ENCODE measurements at regions of chr6 and their contacts with region 1.

Region 1: GRCh38 chr6:131063028-131063763 is at the start of gene EPB41L2:
- DNase-seq: peak; percentile 80
- H3K4me3 Mint-ChIP-seq: peak within 1 kb of the TSS; percentile 80
- H3K27ac Mint-ChIP-seq: no peak within 1 kb of the TSS
- H3K4me1 Mint-ChIP-seq: peaks cover 22% of the 10 kb centered on the region
- H3K27me3 Mint-ChIP-seq: peaks cover 2% of the 10 kb centered on the region
- total RNA-seq, gene EPB41L2: 33.5 to 37.7 TPM

Region 2: GRCh38 chr6:130933712-130934200 is 129.4 kb before region 1 on chr6:
- CTCF ChIA-PET with region 1: no interaction called
- intact Hi-C with region 1: no loop called
- DNase-seq: no peak
- H3K4me3 Mint-ChIP-seq: no peak overlapping the region
- H3K27ac Mint-ChIP-seq: no peak overlapping the region
- H3K4me1 Mint-ChIP-seq: no peaks in the 10 kb centered on the region
- H3K27me3 Mint-ChIP-seq: no peaks in the 10 kb centered on the region

Region 3: DNA sequence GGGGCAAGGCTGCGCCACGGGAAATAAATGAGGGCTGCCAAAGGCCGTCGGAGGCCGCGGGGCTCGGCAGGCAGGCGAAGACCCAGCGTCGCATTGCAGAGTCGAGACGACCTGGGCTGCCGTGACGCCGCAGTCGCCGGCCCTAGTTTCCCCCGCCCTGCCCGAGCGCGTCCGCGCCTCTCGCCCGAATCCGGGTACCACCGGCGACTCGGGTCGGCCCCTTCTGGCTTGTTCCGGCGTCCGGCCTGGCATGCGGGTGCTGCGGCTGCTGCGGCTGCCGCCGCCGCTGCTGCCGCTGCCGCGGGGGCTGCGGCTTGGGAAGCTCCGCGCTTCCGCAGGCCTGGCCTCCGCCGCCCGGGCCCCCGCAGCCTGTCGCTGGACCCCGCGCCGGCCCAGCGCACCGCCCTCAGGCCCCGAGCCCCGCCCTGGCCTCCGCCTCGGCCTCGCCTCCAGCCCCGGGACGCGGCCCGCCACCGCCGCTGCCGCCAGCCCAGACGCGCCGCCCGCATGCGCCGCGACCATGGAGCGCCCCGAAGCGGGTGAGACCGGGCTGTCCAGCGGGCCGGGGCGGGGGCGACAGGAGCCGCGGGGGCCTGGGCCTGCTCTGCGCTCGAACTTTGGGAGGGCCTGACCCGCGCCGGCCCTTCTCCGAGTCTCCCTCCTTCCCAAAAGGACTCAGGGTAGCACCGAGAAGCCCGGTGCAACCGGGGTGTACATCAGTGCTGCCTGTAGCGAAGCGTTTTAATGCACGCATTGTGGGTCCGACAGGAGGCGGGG is 72.2 kb after region 1 on chr6 and contains the start of gene AKAP7:
- CTCF ChIA-PET with region 1: interaction called, 3 read pairs
- intact Hi-C with region 1: loop called (anchors 2 kb)
- DNase-seq: peak; percentile 67
- H3K4me3 Mint-ChIP-seq: peak within 1 kb of the TSS; percentile 85
- H3K27ac Mint-ChIP-seq: peak within 1 kb of the TSS; percentile 83
- H3K4me1 Mint-ChIP-seq: peaks cover 13% of the 10 kb centered on the region
- H3K27me3 Mint-ChIP-seq: no peaks in the 10 kb centered on the region
- total RNA-seq, gene AKAP7: 7.3 to 7.5 TPM

Region 4: DNA sequence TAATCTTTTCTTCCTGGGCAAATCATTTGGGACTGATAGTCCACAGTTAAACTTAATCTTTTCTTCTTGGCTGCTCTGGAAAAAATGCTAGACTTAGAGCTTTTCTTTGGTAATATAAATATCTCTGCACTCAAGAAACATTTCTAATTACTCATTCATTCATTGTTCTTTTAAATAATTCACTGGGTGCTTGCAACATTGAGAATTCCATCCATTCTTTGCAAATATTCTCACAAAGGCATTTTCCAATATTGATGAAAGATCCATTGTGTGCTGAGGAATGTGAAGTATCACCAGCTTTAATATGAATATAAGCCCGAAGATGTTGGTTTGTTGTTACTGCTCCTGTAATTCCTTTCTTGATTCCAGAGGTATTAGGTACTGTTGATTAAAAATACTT is 110.5 kb after region 1 on chr6:
- CTCF ChIA-PET with region 1: no interaction called
- intact Hi-C with region 1: no loop called
- DNase-seq: no peak
- H3K4me3 Mint-ChIP-seq: no peak overlapping the region
- H3K27ac Mint-ChIP-seq: no peak overlapping the region
- H3K4me1 Mint-ChIP-seq: no peaks in the 10 kb centered on the region
- H3K27me3 Mint-ChIP-seq: no peaks in the 10 kb centered on the region

Region 5: GRCh38 chr6:131443514-131443913 is 380.3 kb after region 1 on chr6:
- CTCF ChIA-PET with region 1: no interaction called
- intact Hi-C with region 1: loop called (anchors 2 kb)
- DNase-seq: peak; percentile 63
- H3K4me3 Mint-ChIP-seq: peak overlapping the region; percentile 83
- H3K27ac Mint-ChIP-seq: peak overlapping the region; percentile 90
- H3K4me1 Mint-ChIP-seq: peaks cover 58% of the 10 kb centered on the region
- H3K27me3 Mint-ChIP-seq: no peaks in the 10 kb centered on the region